K562 (cell line): ENCODE measurements at regions of chr9 and their contacts with region 1.

Region 1: DNA sequence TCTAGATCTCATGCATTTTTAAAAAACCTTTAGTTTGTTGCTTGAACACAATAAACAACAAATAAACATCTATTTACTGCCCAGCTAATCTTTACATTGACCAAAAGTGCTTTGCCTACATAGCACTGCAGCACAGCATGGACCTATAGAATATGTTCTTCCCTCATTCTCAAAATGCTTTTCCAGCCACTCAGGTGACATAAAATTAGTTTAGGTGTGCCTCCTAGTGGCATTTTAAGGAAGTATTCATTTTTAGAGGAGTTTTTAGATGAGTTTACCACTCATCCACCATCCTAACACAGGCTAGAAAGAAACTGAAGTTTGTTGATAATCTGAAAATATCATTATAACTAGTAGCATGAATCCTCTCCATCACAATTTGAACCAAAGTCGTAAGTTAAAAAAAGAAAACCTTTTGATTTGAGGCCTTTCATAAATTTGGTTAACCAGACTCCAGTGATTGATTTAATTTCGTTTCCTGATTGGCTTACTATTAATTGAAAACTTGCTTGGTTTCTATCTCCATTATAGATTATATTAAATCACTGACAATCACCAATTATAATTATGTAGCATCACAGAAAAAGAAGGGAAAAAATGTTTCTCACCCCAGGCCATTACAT is 12.6 kb downstream of the PLGRKT start:
- DNase-seq: peak; percentile 17 to 29 (median 18)
- ATAC-seq: peak; percentile 62; the same call in 2 of the 3 replicates
- H3K4me3 ChIP-seq: no peak overlapping the region
- H3K27ac ChIP-seq: no peak overlapping the region
- H3K4me1 ChIP-seq: no peaks in the 10 kb centered on the region
- H3K27me3 ChIP-seq: no peaks in the 10 kb centered on the region
- CTCF ChIP-seq: peak; percentile 30 to 59 (median 53); a peak in 4 of 6 replicates
- EP300 ChIP-seq: no peak
- POLR2A ChIP-seq: no peak
- RAD21 ChIP-seq: peak; percentile 55 to 81

Region 2: GRCh38 chr9:4762108-4762885 is 662.8 kb before region 1 on chr9:
- CTCF ChIA-PET with region 1: no interaction called
- POLR2A ChIA-PET with region 1: no interaction called
- in situ Hi-C with region 1: no loop called
- intact Hi-C with region 1: loop called (anchors 5 kb)
- DNase-seq: peak; percentile 25 to 86 (median 38)
- ATAC-seq: peak; percentile 75
- H3K4me3 ChIP-seq: peak overlapping the region; percentile 7; the same call in 1 of the 2 replicates
- H3K27ac ChIP-seq: peak overlapping the region; percentile 62
- H3K4me1 ChIP-seq: peaks cover 8 to 12% of the 10 kb centered on the region in 2 experiments; a peak in 4 of 5 replicates
- H3K27me3 ChIP-seq: no peaks in the 10 kb centered on the region
- CTCF ChIP-seq: peak; percentile 71 to 83 (median 76)
- EP300 ChIP-seq: no peak
- POLR2A ChIP-seq: no peak
- RAD21 ChIP-seq: peak; percentile 82 to 92

Region 3: GRCh38 chr9:5186416-5187169 is 238.5 kb before region 1 on chr9:
- CTCF ChIA-PET with region 1: interaction called, 4 read pairs
- POLR2A ChIA-PET with region 1: interaction called, 4 read pairs
- in situ Hi-C with region 1: no loop called
- intact Hi-C with region 1: loop called (anchors 5 kb)
- DNase-seq: peak; percentile 35 to 47 (median 41)
- ATAC-seq: peak; percentile 83
- H3K4me3 ChIP-seq: no peak overlapping the region
- H3K27ac ChIP-seq: no peak overlapping the region
- H3K4me1 ChIP-seq: peaks cover 0 to 5% of the 10 kb centered on the region in 2 experiments; a peak in 2 of 5 replicates
- H3K27me3 ChIP-seq: no peaks in the 10 kb centered on the region
- CTCF ChIP-seq: peak; percentile 54 to 65 (median 65)
- EP300 ChIP-seq: no peak
- POLR2A ChIP-seq: no peak
- RAD21 ChIP-seq: peak; percentile 60 to 70

Region 4: DNA sequence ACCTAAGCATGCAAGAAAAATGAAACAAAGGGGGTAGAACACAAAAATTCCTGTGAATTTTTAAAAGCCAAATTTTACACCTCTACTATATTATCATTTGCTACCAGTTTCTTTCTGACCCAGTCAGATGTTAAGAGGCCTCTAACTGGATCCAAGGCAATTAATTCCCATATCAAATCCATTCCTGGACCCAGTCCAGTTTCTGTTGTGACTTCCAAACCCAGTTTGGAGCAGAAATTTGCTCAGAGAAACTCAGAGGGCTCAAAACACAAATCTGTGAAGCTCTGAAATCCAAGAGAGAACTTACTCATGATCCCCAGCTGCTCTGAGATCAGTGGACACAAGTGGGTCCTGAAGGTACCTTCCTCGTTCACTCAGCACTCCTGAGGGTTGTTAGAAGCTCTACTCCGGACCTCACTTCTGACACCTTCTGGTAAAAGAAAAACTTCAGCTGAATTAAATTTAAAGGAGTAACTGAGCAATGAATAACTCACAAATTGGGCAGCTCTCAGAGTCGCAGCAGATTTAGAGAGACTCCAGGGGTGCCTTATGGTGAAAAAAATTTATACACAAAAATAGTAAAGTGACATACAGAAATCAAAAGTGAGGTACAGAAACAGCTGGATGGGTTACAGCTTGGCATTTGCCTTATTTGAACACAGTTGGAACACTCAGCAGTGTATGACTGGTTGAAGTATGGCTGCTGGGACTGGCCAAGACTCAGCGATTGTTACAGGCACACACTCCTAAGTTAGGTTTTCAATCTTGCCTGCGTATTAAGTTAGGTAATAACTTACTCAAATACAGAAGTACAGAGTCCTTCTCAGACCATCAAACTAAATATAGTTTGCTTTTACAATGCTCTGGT is 161.5 kb before region 1 on chr9:
- CTCF ChIA-PET with region 1: no interaction called
- POLR2A ChIA-PET with region 1: no interaction called
- in situ Hi-C with region 1: no loop called
- intact Hi-C with region 1: loop called (anchors 10 kb)
- DNase-seq: peak in 2 of 4 experiments; percentile 5 to 14
- ATAC-seq: peak; percentile 64; the same call in 2 of the 3 replicates
- H3K4me3 ChIP-seq: no peak overlapping the region
- H3K27ac ChIP-seq: no peak overlapping the region
- H3K4me1 ChIP-seq: no peaks in the 10 kb centered on the region
- H3K27me3 ChIP-seq: no peaks in the 10 kb centered on the region; a peak in 1 of 5 replicates
- CTCF ChIP-seq: peak; percentile 10 to 29 (median 11); a peak in 2 of 6 replicates
- EP300 ChIP-seq: no peak
- POLR2A ChIP-seq: no peak
- RAD21 ChIP-seq: peak in 1 of 2 experiments; percentile 32; a peak in 1 of 4 replicates